ENCODE measurements at regions of chr2 and their contacts with region 1.

Region 1: DNA sequence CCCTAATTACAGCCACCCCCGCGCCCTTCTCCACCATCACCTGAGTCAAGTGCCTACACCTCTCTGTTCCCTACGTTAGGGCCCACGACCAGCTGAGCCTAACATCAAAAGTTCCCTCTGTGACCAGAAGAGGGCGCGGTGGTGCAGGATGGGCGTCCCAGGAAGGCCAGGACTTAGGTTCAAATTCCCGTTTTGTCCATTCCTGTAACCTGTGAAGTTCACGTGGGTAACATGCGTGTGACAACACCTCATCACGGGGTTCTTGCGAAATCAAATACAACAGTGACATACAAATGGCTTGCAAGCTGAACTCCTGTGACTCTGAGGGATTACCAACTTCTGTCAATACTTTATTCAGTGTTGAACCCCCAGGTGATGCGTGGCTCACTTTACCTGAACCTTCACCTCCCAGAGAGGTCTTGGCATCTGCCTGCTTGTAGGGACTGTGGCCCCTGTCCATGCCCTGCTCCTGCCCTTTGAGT is 207.9 kb downstream of the ARL4C start:
- DNase-seq: peak; percentile 61 to 81 (median 70)
- ATAC-seq: peak; percentile 30
- H3K4me3 ChIP-seq: no peak overlapping the region
- H3K4me3 Mint-ChIP-seq: peak overlapping the region; percentile 10 to 87 (median 70)
- H3K27ac ChIP-seq: peak overlapping the region; percentile 94
- H3K27ac Mint-ChIP-seq: peak overlapping the region; percentile 92 to 100 (median 99)
- H3K4me1 ChIP-seq: peaks cover 56 to 63% of the 10 kb centered on the region in 2 donors
- H3K4me1 Mint-ChIP-seq: peaks cover 47 to 80% (median 68%) of the 10 kb centered on the region in 7 donors
- H3K27me3 ChIP-seq: no peaks in the 10 kb centered on the region
- H3K27me3 Mint-ChIP-seq: no peaks in the 10 kb centered on the region

Region 2: GRCh38 chr2:233674995-233675394 is 614.0 kb before region 1 on chr2:
- CTCF ChIA-PET with region 1: no interaction called
- POLR2A ChIA-PET with region 1: no interaction called
- intact Hi-C with region 1: no loop called
- DNase-seq: no peak
- ATAC-seq: no peak
- H3K4me3 ChIP-seq: no peak overlapping the region
- H3K4me3 Mint-ChIP-seq: no peak overlapping the region
- H3K27ac ChIP-seq: no peak overlapping the region
- H3K27ac Mint-ChIP-seq: no peak overlapping the region
- H3K4me1 ChIP-seq: no peaks in the 10 kb centered on the region
- H3K4me1 Mint-ChIP-seq: no peaks in the 10 kb centered on the region
- H3K27me3 ChIP-seq: no peaks in the 10 kb centered on the region
- H3K27me3 Mint-ChIP-seq: peaks cover 28 to 59% (median 35%) of the 10 kb centered on the region in 5 donors

Region 3: GRCh38 chr2:233990261-233990798 is 298.7 kb before region 1 on chr2:
- CTCF ChIA-PET with region 1: no interaction called
- POLR2A ChIA-PET with region 1: interaction called, 4 read pairs
- intact Hi-C with region 1: loop called (anchors 5 kb)
- DNase-seq: peak in 8 of 9 donors; percentile 35 to 85 (median 76)
- ATAC-seq: peak; percentile 92
- H3K4me3 ChIP-seq: peak overlapping the region; percentile 21
- H3K4me3 Mint-ChIP-seq: peak overlapping the region; percentile 40 to 80 (median 69)
- H3K27ac ChIP-seq: no peak overlapping the region
- H3K27ac Mint-ChIP-seq: peak overlapping the region; percentile 64 to 93 (median 84)
- H3K4me1 ChIP-seq: peaks cover 31 to 37% of the 10 kb centered on the region in 2 donors
- H3K4me1 Mint-ChIP-seq: peaks cover 33 to 68% (median 55%) of the 10 kb centered on the region in 7 donors
- H3K27me3 ChIP-seq: no peaks in the 10 kb centered on the region
- H3K27me3 Mint-ChIP-seq: peaks cover 0 to 34% (median 0%) of the 10 kb centered on the region in 5 donors

Region 4: DNA sequence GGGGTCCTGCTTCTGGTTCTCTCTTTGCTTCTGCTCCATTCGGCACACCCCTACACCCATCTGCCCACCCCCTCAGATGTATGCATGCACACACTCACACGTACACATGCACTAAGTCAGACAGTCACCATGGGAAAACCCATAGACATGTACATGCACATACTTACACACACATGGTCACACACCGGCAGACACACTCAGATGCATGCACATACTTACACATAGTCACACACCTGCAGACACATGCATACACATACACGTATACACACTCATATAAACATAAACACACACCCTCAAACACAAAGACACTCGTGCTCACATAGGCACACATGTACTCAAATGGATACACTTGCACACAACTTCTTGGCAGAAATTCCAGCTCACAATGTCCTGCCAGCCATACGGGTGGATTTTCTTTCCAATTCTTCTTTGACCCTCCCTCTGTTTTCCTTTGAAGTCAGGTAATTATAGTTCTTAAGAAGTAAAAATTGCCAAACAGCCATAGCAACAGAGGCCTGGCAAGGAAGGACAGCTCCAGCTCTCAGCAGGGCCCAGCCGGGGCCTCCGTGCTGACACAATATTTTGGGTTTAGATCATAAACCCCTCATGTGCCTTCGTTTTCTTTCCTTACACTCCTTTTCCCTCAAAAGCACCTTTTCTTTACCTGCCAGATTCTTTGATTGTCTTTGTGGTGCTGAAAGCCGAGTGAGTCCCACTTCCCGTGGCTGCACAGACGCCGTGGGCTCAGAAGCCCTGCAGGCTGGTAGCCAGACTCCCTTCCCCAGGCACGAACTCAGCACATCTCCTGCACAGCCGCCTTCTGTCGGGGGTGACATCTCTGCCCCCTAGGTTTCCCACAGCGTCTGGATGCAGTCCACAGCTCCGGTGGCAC is 12.2 kb after region 1 on chr2:
- CTCF ChIA-PET with region 1: interaction called, 6 read pairs
- POLR2A ChIA-PET with region 1: interaction called, 12 read pairs
- intact Hi-C with region 1: loop called in 1 of 2 experiments (anchors 1 kb)
- DNase-seq: peak in 3 of 9 donors; percentile 15 to 34 (median 21)
- ATAC-seq: no peak
- H3K4me3 ChIP-seq: peak overlapping the region; percentile 12
- H3K4me3 Mint-ChIP-seq: peak overlapping the region; percentile 16 to 81 (median 66)
- H3K27ac ChIP-seq: no peak overlapping the region
- H3K27ac Mint-ChIP-seq: peak overlapping the region; percentile 64 to 95 (median 83)
- H3K4me1 ChIP-seq: peaks cover 11 to 57% of the 10 kb centered on the region in 2 donors
- H3K4me1 Mint-ChIP-seq: peaks cover 34 to 79% (median 68%) of the 10 kb centered on the region in 7 donors
- H3K27me3 ChIP-seq: no peaks in the 10 kb centered on the region
- H3K27me3 Mint-ChIP-seq: no peaks in the 10 kb centered on the region

Region 5: GRCh38 chr2:234374736-234375135 is 85.7 kb after region 1 on chr2:
- CTCF ChIA-PET with region 1: interaction called, 8 read pairs
- POLR2A ChIA-PET with region 1: interaction called, 34 read pairs
- intact Hi-C with region 1: loop called (anchors 1 to 2 kb)
- DNase-seq: no peak
- ATAC-seq: no peak
- H3K4me3 ChIP-seq: no peak overlapping the region
- H3K4me3 Mint-ChIP-seq: peak overlapping the region in 2 of 10 donors; percentile 35 to 76
- H3K27ac ChIP-seq: no peak overlapping the region
- H3K27ac Mint-ChIP-seq: peak overlapping the region; percentile 57 to 98 (median 94)
- H3K4me1 ChIP-seq: peaks cover 7 to 47% of the 10 kb centered on the region in 2 donors
- H3K4me1 Mint-ChIP-seq: peaks cover 26 to 74% (median 62%) of the 10 kb centered on the region in 7 donors
- H3K27me3 ChIP-seq: no peaks in the 10 kb centered on the region
- H3K27me3 Mint-ChIP-seq: no peaks in the 10 kb centered on the region

Region 6: DNA sequence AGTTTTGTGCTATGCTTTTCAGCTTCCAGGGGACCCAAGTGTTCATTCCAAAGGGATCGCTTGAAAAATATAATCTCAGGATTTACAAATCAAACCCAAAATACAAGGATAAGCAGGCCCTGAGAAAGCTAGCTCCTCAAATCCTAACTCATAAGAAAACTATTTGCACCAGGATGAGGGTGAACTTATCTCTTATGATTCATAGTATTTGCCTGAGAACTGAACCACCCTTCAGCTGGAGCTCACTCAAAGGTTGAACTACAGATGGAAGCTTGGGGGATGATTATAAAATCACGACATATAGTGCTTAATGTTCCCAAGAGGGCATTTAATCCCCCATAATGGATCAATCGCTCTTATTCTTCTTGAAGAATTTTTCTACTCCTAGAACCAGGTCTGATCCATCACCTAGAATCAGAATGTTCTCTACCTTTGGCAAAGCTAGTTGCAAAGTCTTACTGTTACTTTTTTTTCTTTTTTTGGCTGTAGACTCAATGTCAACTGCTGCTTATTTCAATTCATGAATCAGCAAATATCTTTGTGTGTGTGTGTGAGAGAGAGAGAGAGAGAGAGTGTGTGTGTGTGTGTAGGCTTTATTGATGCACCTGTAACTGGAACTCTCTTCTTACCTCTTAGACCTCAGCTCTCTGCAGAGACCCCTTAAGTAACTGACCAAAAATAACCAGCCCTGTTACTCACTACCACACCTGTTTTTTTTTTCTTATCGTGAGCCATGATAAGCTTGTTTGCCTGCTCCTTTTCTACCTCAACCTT is 163.0 kb after region 1 on chr2:
- CTCF ChIA-PET with region 1: interaction called, 17 read pairs
- POLR2A ChIA-PET with region 1: interaction called, 270 read pairs
- intact Hi-C with region 1: loop called (anchors 1 kb)
- DNase-seq: peak in 7 of 9 donors; percentile 30 to 74 (median 62)
- ATAC-seq: peak; percentile 41
- H3K4me3 ChIP-seq: peak overlapping the region; percentile 71
- H3K4me3 Mint-ChIP-seq: peak overlapping the region; percentile 83 to 99 (median 91)
- H3K27ac ChIP-seq: peak overlapping the region; percentile 96
- H3K27ac Mint-ChIP-seq: peak overlapping the region; percentile 90 to 100 (median 96)
- H3K4me1 ChIP-seq: peaks cover 66 to 70% of the 10 kb centered on the region in 2 donors
- H3K4me1 Mint-ChIP-seq: peaks cover 32 to 88% (median 84%) of the 10 kb centered on the region in 7 donors
- H3K27me3 ChIP-seq: no peaks in the 10 kb centered on the region
- H3K27me3 Mint-ChIP-seq: no peaks in the 10 kb centered on the region

Region 7: GRCh38 chr2:234494361-234495250 is 205.6 kb after region 1 on chr2:
- CTCF ChIA-PET with region 1: interaction called, 32 read pairs
- POLR2A ChIA-PET with region 1: interaction called, 150 read pairs
- intact Hi-C with region 1: loop called (anchors 1 kb)
- DNase-seq: peak in 7 of 9 donors; percentile 51 to 67 (median 57)
- ATAC-seq: peak; percentile 14
- H3K4me3 ChIP-seq: peak overlapping the region; percentile 95
- H3K4me3 Mint-ChIP-seq: peak overlapping the region; percentile 96 to 100 (median 98)
- H3K27ac ChIP-seq: peak overlapping the region; percentile 94
- H3K27ac Mint-ChIP-seq: peak overlapping the region; percentile 91 to 100 (median 98)
- H3K4me1 ChIP-seq: peaks cover 34 to 46% of the 10 kb centered on the region in 2 donors
- H3K4me1 Mint-ChIP-seq: peaks cover 26 to 50% (median 43%) of the 10 kb centered on the region in 7 donors
- H3K27me3 ChIP-seq: no peaks in the 10 kb centered on the region
- H3K27me3 Mint-ChIP-seq: peaks cover 0 to 5% (median 0%) of the 10 kb centered on the region in 5 donors

Region 8: DNA sequence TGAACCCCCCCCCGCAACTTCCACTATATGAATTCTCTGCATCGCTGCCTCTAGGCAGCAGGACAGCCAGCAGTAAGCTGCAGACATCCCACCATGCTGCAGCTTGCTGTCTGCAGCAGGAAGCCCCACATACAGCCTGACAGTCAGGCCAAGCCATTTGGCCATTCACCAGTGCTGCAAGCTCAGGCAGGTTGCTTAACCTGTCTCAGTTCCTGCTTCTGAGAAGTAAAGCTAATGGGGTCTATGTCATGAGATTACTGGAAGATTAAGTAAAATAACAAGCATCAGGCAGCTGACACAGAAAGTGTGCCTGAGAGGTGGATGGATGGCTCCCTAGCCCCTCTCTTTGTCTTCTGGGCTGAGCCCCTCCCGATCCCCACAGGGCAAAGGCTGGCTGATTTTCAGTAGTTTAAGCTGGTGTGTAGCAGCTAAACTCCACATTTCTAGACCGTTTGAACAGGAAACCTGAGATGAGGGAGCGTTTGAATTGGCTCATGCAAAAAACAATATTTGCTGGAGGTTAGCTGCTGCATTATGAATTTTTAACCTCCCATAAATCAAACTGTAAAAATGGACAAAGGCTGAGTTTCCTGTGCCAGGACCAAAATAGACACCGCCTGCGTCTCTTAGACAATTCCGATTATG is 401.7 kb after region 1 on chr2:
- CTCF ChIA-PET with region 1: no interaction called
- POLR2A ChIA-PET with region 1: no interaction called
- intact Hi-C with region 1: no loop called
- DNase-seq: no peak
- ATAC-seq: no peak
- H3K4me3 ChIP-seq: no peak overlapping the region
- H3K4me3 Mint-ChIP-seq: no peak overlapping the region
- H3K27ac ChIP-seq: no peak overlapping the region
- H3K27ac Mint-ChIP-seq: no peak overlapping the region
- H3K4me1 ChIP-seq: no peaks in the 10 kb centered on the region
- H3K4me1 Mint-ChIP-seq: peaks cover 0 to 9% (median 0%) of the 10 kb centered on the region in 7 donors
- H3K27me3 ChIP-seq: no peaks in the 10 kb centered on the region
- H3K27me3 Mint-ChIP-seq: peaks cover 13 to 57% (median 37%) of the 10 kb centered on the region in 5 donors